Motor neuron (in vitro differentiated cells): ENCODE measurements at regions of chr17 and their contacts with region 1.

Region 1: DNA sequence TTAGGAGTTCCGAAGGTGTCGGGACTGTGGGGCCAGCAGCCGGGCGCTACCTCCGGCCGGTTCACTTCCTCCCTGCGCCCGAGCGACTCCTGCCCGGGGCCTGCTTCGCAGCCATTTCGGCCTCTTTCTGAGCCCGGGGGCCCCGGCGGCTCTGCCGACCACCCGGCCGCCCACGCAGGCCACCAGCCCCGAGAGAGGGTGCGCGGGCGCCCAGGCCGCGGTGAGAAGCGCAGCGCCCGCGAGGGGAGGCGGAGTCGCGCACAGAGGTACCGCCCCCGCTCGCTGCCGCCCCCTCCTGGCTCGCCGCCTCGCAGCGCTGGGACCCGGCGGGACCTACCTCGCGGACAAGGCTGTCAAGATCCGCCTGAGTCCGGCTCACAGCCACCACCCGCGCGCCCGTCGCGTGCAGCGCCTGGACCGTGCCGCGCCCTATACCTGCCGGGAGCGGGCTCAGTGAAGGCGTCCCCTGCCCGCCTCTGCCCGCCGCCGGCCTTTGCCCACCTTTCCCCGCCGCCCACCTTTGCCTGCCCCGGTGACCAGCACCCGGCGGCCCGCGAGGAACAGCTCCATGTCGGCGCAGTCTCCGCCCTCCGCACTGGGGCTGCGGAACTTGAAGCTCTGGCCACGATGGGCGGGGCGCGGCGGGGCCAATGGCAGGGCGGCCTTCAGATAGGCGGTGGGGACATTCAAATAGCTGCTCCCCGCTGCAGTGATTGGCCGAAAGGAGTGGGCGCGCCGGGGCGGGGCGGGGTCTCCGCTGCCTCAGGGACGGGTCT is at the start of gene DCXR:
- ATAC-seq: peak; percentile 89 to 96 (median 92)
- H3K4me3 ChIP-seq: peak within 1 kb of the TSS; percentile 60 to 84 (median 64)
- H3K27ac ChIP-seq: peak within 1 kb of the TSS; percentile 78 to 81
- H3K4me1 ChIP-seq: peaks cover 12 to 17% of the 10 kb centered on the region in 2 donors
- total RNA-seq, gene DCXR: 55.7 to 94.5 (median 80.7) TPM

Region 2: DNA sequence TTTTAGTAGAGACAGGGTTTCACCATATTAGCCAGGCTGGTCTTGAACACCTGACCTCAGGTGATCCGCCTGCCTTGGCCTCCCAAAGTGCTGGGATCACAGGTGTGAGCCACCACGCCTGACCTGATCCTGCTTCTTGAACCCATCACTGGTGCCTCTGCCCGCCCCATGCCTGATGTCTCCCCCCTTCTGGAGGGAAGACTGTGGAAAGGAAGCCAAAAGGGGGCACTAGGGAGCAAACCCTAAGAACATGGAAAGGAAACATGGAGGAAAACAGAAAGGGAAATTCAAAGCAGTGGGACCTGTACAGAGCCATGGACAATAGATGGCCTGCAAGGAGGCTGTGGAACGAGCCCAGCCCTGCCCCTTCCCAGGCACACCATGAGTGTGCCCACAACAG is 91.8 kb after region 1 on chr17:
- in situ Hi-C with region 1: loop called in 2 of 9 experiments (anchors 25 kb)
- ATAC-seq: no peak
- H3K4me3 ChIP-seq: no peak overlapping the region
- H3K27ac ChIP-seq: no peak overlapping the region
- H3K4me1 ChIP-seq: no peaks in the 10 kb centered on the region

Region 3: GRCh38 chr17:82153745-82154375 is 116.6 kb after region 1 on chr17:
- in situ Hi-C with region 1: loop called in 5 of 9 experiments (anchors 10 to 25 kb)
- ATAC-seq: peak; percentile 88 to 98 (median 94)
- H3K4me3 ChIP-seq: no peak overlapping the region
- H3K27ac ChIP-seq: no peak overlapping the region
- H3K4me1 ChIP-seq: no peaks in the 10 kb centered on the region